Ascending aorta (tissue), 2 donors: ENCODE measurements at regions of chr19 and their contacts with region 1.

Region 1: DNA sequence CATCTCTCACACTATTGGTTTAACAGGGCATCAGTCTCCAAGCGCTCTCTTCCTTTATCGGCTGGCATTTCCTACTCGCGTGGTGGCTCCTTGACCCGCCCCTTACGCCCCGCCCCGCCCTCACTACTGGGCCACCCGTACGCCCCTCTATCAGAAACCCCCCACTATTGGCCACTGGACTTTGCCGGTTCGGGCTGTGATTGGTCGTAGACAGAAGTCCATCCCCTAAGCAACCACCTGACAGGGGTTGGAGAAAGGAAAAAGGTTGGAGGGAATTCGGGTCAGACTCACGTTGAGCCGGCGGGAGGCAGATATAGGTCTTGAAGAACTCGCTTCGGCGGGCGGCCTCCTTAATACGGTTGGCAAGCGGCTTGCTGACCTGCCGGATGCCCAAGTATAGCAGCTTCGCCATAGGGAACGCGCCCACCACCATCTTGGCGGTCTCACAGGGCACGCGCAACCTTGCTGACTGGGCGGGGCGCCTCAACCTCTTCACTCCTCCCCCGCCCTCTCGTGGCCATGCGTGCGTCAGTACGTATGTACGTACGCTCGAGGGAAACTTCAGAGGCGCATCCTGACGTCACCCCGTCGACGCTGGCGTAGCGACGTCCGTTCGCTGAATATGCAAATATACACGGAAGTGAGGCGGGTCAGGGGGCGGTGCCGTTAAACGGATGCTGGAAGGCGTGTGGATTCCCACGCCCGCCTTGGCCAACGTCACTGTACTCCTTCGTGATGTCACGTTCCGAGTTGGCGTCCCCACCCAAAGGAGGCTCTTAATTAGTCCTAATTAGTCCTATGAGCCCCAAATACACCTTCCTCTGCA is at the start of gene OPA3:
- DNase-seq: peak; percentile 99 to 100
- H3K4me3 ChIP-seq: peak within 1 kb of the TSS; percentile 67
- H3K27ac ChIP-seq: peak within 1 kb of the TSS; percentile 95 to 97
- H3K4me1 ChIP-seq: peaks cover 0 to 10% of the 10 kb centered on the region in 2 donors
- H3K27me3 ChIP-seq: no peaks in the 10 kb centered on the region
- CTCF ChIP-seq: no peak
- total RNA-seq, gene OPA3: 4.5 TPM

Region 2: DNA sequence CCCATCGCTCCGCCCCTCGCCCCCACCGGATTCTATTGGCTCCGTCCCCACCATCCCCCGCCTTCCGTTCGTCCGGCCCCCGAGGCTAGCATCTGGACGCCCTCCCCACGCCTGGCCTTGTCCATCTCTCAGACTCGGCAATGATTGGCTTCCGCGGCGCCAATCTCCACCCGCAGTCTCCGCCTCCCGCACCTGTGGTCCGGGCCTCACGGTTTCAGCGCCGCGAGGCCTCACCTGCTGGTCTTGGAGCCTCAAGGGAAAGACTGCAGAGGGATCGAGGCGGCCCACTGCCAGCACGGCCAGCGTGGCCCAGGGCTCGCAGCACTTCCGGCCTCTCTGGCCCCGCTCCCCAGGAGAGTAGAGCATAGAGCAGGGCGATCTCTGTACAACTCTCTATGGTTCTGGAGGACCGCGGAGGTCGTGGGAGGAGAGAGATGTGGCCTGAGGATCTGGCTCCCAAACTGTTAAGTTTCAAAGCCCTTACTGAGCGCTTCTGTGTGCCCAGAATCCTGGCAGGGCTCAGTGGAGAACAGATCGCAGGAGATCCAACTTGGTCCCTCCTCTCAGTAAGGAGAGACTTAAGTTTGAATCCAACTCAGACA is 160.9 kb before region 1 on chr19 and contains the start of gene ERCC1:
- intact Hi-C with region 1: loop called (anchors 2 kb)
- DNase-seq: peak; percentile 76 to 98
- H3K4me3 ChIP-seq: peak within 1 kb of the TSS; percentile 69 to 85
- H3K27ac ChIP-seq: peak within 1 kb of the TSS; percentile 89 to 95
- H3K4me1 ChIP-seq: peaks cover 0 to 32% of the 10 kb centered on the region in 2 donors
- H3K27me3 ChIP-seq: no peaks in the 10 kb centered on the region
- CTCF ChIP-seq: no peak
- total RNA-seq, gene ERCC1: 142 TPM

Region 3: GRCh38 chr19:45632468-45633196 is 48.1 kb after region 1 on chr19:
- intact Hi-C with region 1: no loop called
- DNase-seq: peak in 1 of 2 donors; percentile 88
- H3K4me3 ChIP-seq: no peak overlapping the region
- H3K27ac ChIP-seq: peak overlapping the region; percentile 49 to 82
- H3K4me1 ChIP-seq: peaks cover 0 to 11% of the 10 kb centered on the region in 2 donors
- H3K27me3 ChIP-seq: no peaks in the 10 kb centered on the region
- CTCF ChIP-seq: no peak